Activated CD8-positive, alpha-beta T cell treated with anti-CD3 and anti-CD28 coated beads for 36 hours (primary cell): ENCODE measurements at regions of chr14 and their contacts with region 1.

Region 1: GRCh38 chr14:61475316-61475715 is 153.9 kb downstream of the PRKCH start:
- DNase-seq: no peak
- ATAC-seq: no peak
- H3K4me3 Mint-ChIP-seq: peak overlapping the region; percentile 47
- H3K27ac Mint-ChIP-seq: peak overlapping the region; percentile 92
- H3K4me1 Mint-ChIP-seq: peaks cover 91% of the 10 kb centered on the region
- H3K27me3 Mint-ChIP-seq: no peaks in the 10 kb centered on the region
- CTCF ChIP-seq: peak; percentile 86

Region 2: GRCh38 chr14:61461808-61462275 is 13.5 kb before region 1 on chr14:
- CTCF ChIA-PET with region 1: interaction called, 34 read pairs
- POLR2A ChIA-PET with region 1: interaction called, 12 read pairs
- intact Hi-C with region 1: no loop called
- DNase-seq: peak; percentile 42
- ATAC-seq: peak; percentile 22
- H3K4me3 Mint-ChIP-seq: no peak overlapping the region
- H3K27ac Mint-ChIP-seq: peak overlapping the region; percentile 97
- H3K4me1 Mint-ChIP-seq: peaks cover 63% of the 10 kb centered on the region
- H3K27me3 Mint-ChIP-seq: no peaks in the 10 kb centered on the region
- CTCF ChIP-seq: peak; percentile 96

Region 3: DNA sequence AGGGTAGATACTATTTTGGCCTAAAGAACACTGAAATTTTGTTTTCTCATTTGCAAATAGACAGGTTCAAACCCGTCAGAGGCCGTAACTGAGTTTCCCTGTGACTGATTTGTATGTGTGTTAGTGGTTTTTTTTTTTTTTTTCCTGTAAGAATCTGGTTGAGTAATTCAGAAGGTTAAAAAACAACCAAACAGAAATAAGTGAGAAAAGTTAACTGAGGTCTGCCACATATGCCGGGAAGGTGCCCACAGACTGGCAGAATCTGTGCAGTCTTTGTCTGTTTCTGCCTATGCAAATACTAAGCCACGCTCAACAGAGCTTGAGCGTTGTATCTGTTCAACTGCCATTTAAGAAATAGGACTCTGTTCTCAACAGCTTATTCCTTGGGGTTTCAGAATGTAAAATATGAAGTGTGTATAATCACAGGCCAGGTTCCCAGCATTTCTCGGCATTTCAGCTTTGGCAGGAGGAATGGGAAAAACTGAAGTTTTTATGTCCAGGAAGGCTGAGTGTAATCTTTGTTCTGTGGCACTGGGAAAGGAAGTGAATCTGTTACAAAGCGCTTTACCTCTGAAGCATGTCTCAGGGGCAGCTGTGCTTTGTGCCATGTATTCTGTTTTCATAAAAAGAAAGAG is 28.0 kb after region 1 on chr14:
- CTCF ChIA-PET with region 1: interaction called, 94 read pairs
- POLR2A ChIA-PET with region 1: interaction called, 100 read pairs
- intact Hi-C with region 1: loop called (anchors 2 kb)
- DNase-seq: peak; percentile 89
- ATAC-seq: peak; percentile 75
- H3K4me3 Mint-ChIP-seq: peak overlapping the region; percentile 70
- H3K27ac Mint-ChIP-seq: peak overlapping the region; percentile 100
- H3K4me1 Mint-ChIP-seq: peaks cover 97% of the 10 kb centered on the region
- H3K27me3 Mint-ChIP-seq: no peaks in the 10 kb centered on the region
- CTCF ChIP-seq: no peak

Region 4: GRCh38 chr14:61525293-61526011 is 50.1 kb after region 1 on chr14:
- CTCF ChIA-PET with region 1: interaction called, 29 read pairs
- POLR2A ChIA-PET with region 1: interaction called, 9 read pairs
- intact Hi-C with region 1: loop called (anchors 2 kb)
- DNase-seq: peak; percentile 89
- ATAC-seq: peak; percentile 77
- H3K4me3 Mint-ChIP-seq: peak overlapping the region; percentile 43
- H3K27ac Mint-ChIP-seq: peak overlapping the region; percentile 87
- H3K4me1 Mint-ChIP-seq: peaks cover 88% of the 10 kb centered on the region
- H3K27me3 Mint-ChIP-seq: no peaks in the 10 kb centered on the region
- CTCF ChIP-seq: no peak

Region 5: GRCh38 chr14:61589691-61590521 is 114.6 kb after region 1 on chr14:
- CTCF ChIA-PET with region 1: interaction called, 6 read pairs
- POLR2A ChIA-PET with region 1: interaction called, 4 read pairs
- intact Hi-C with region 1: loop called (anchors 5 kb)
- DNase-seq: peak; percentile 14
- ATAC-seq: no peak
- H3K4me3 Mint-ChIP-seq: no peak overlapping the region
- H3K27ac Mint-ChIP-seq: peak overlapping the region; percentile 55
- H3K4me1 Mint-ChIP-seq: peaks cover 59% of the 10 kb centered on the region
- H3K27me3 Mint-ChIP-seq: no peaks in the 10 kb centered on the region
- CTCF ChIP-seq: no peak

Region 6: DNA sequence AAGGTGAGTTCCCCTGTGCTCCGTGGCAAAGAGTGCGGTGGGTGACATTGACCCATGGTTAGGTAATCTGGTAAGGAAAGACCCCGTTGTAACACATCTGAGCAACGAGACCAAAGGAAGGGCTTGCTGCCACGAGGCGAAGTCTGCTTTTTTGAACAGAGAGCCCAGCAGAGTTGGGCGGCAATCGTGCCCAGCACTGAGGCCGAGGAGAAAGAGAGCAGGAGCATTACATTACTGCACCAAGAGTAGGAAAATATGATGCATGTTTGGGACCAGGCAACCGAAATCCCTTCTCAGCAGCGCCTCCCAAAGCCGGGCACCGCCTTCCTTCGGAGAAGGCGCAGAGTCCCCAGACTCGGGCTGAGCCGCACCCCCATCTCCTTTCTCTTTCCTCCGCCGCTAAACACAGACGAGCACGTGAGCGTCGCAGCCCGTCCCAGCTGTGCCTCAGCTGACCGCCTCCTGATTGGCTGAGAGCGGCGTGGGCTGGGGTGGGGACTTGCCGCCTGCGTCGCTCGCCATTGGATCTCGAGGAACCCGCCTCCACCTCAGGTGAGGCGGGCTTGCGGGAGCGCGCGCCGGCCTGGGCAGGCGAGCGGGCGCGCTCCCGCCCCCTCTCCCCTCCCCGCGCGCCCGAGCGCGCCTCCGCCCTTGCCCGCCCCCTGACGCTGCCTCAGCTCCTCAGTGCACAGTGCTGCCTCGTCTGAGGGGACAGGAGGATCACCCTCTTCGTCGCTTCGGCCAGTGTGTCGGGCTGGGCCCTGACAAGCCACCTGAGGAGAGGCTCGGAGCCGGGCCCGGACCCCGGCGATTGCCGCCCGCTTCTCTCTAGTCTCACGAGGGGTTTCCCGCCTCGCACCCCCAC is 219.7 kb after region 1 on chr14 and contains the start of gene HIF1A:
- CTCF ChIA-PET with region 1: interaction called, 8 read pairs
- POLR2A ChIA-PET with region 1: interaction called, 9 read pairs
- intact Hi-C with region 1: loop called (anchors 10 kb)
- DNase-seq: peak; percentile 98
- ATAC-seq: peak; percentile 89
- H3K4me3 Mint-ChIP-seq: peak within 1 kb of the TSS; percentile 98
- H3K27ac Mint-ChIP-seq: peak within 1 kb of the TSS; percentile 96
- H3K4me1 Mint-ChIP-seq: peaks cover 47% of the 10 kb centered on the region
- H3K27me3 Mint-ChIP-seq: peaks cover 1% of the 10 kb centered on the region
- CTCF ChIP-seq: no peak
- total RNA-seq, gene HIF1A: 133 to 140 TPM

Region 7: DNA sequence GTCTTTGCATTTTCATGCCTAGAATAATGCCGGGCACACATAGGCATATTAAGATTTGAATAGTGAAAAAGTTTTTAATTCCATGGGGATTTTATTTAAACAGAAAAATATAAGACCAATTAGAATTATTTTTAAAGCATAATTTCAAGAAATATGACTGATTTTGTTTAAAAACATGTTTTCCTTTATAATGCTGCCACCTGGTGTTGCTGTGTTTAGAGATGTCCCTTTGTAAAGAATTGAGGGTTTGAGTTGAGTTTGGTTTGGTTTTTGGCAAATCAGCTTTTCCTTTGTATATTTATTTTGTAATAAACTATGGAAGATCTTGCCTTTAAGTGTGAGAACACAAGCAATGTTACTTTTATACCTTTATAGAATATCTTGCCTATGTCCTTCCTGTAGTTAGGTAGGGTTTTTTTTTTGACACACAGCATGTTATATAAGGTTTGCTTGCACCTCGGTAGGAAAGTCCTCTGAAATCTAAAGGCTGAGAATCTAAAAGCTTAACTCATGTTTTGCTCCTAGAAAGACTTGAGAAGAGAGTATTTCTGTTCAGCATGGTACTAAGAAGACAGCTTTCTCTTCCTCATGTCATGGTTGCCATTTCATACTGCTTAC is 255.5 kb after region 1 on chr14:
- CTCF ChIA-PET with region 1: interaction called, 12 read pairs
- POLR2A ChIA-PET with region 1: no interaction called
- intact Hi-C with region 1: no loop called
- DNase-seq: no peak
- ATAC-seq: no peak
- H3K4me3 Mint-ChIP-seq: no peak overlapping the region
- H3K27ac Mint-ChIP-seq: peak overlapping the region; percentile 60
- H3K4me1 Mint-ChIP-seq: peaks cover 49% of the 10 kb centered on the region
- H3K27me3 Mint-ChIP-seq: no peaks in the 10 kb centered on the region
- CTCF ChIP-seq: peak; percentile 49